ENCODE measurements at regions of chr14 and their contacts with region 1.

Region 1: GRCh38 chr14:66359500-66359899 is 126.7 kb upstream of the CCDC196 start:
- DNase-seq: peak; percentile 23
- ATAC-seq: no peak
- H3K4me3 Mint-ChIP-seq: no peak overlapping the region
- H3K27ac Mint-ChIP-seq: no peak overlapping the region
- H3K4me1 Mint-ChIP-seq: no peaks in the 10 kb centered on the region
- H3K27me3 Mint-ChIP-seq: no peaks in the 10 kb centered on the region

Region 2: DNA sequence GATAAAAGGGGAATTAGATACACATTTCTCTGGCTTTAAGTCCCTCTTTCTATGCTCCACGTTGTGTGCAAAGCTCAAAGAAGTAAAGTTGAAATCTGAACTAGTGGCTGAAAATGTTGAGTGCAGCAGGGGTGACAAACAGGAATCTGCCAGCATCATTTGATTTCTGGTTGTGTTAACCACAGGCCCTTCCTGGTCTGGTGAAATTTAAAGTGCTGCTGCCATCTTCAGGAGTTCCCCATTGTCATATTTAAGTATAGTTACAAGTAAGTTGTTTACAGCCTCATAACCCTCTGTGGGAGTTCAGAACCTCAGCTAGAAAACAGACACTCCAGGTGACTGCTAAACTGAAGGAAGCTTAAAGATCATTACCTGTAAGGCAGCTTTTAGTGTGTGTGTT is 35.8 kb after region 1 on chr14:
- CTCF ChIA-PET with region 1: interaction called, 72 read pairs
- POLR2A ChIA-PET with region 1: no interaction called
- intact Hi-C with region 1: loop called in 1 of 2 experiments (anchors 1 kb)
- DNase-seq: peak; percentile 30
- ATAC-seq: peak; percentile 89
- H3K4me3 Mint-ChIP-seq: no peak overlapping the region
- H3K27ac Mint-ChIP-seq: no peak overlapping the region
- H3K4me1 Mint-ChIP-seq: peaks cover 6% of the 10 kb centered on the region
- H3K27me3 Mint-ChIP-seq: no peaks in the 10 kb centered on the region

Region 3: DNA sequence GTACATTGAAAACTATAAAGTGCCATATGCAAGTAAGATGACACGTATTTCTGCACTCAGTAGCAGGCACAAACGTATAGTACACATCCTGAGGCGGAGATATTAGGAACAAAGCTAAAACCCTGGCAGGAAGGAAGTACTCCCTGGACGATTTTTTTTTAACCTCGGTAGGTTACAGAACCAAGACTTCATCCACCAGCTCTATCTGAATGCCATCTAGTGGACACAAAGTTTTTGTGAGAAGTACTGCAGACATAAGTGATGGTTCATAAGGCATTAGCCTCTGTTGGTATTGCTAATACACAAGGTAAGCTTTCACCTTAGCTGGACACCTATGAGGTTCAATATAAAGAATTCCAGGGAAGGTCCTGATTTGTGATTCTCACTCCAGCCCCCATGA is 43.7 kb after region 1 on chr14:
- CTCF ChIA-PET with region 1: interaction called, 72 read pairs
- POLR2A ChIA-PET with region 1: no interaction called
- intact Hi-C with region 1: loop called (anchors 1 kb)
- DNase-seq: no peak
- ATAC-seq: peak; percentile 36
- H3K4me3 Mint-ChIP-seq: no peak overlapping the region
- H3K27ac Mint-ChIP-seq: no peak overlapping the region
- H3K4me1 Mint-ChIP-seq: peaks cover 5% of the 10 kb centered on the region
- H3K27me3 Mint-ChIP-seq: no peaks in the 10 kb centered on the region

Region 4: DNA sequence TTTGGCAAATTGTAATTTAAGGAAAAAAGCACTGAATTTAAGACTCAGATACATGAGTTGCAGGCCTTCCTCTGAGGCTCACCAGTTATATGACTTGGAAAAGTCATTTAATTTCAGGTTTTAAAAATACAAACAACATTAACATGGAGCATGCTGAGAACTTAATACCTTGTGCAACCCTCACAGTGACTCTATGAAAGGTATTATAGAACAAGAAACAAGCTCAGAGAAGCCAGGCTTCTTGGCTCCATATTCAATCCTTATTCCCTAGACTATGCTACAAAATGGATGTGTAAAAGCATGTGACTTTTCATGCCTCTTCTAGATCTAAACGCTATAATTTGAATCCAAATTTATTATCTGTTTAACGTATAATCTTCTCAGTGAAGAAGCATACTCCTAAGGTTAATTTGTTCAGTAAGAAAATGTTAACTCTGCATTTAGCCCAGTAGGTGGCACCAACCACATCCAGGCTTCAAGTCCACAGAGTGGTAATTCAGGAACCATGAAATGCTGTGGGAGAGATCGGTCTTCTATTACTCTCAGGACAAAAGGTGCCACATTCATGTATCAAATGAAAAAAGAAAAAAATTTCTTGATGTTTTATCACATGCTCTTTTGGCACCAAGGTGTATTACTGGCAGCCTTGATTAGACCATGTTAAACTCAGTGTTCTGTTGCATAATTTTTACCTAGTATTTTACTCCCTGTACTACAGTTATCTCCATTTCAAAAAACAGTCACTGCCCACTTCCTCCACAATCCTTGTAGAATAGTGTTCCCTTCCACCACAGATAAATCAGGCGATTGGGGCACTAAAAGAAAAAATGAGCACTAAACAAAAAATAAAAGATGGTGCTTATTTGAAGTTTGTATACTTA is 136.0 kb after region 1 on chr14:
- CTCF ChIA-PET with region 1: interaction called, 4 read pairs
- POLR2A ChIA-PET with region 1: no interaction called
- intact Hi-C with region 1: loop called (anchors 2 to 5 kb)
- DNase-seq: peak; percentile 52
- ATAC-seq: peak; percentile 83
- H3K4me3 Mint-ChIP-seq: no peak overlapping the region
- H3K27ac Mint-ChIP-seq: no peak overlapping the region
- H3K4me1 Mint-ChIP-seq: peaks cover 19% of the 10 kb centered on the region
- H3K27me3 Mint-ChIP-seq: no peaks in the 10 kb centered on the region

Region 5: GRCh38 chr14:66974397-66975025 is 615.0 kb after region 1 on chr14:
- CTCF ChIA-PET with region 1: no interaction called
- POLR2A ChIA-PET with region 1: no interaction called
- intact Hi-C with region 1: no loop called
- DNase-seq: no peak
- ATAC-seq: no peak
- H3K4me3 Mint-ChIP-seq: no peak overlapping the region
- H3K27ac Mint-ChIP-seq: no peak overlapping the region
- H3K4me1 Mint-ChIP-seq: peaks cover 2% of the 10 kb centered on the region
- H3K27me3 Mint-ChIP-seq: no peaks in the 10 kb centered on the region

Region 6: GRCh38 chr14:67111022-67111421 is 751.5 kb after region 1 on chr14:
- CTCF ChIA-PET with region 1: interaction called, 3 read pairs
- POLR2A ChIA-PET with region 1: no interaction called
- intact Hi-C with region 1: loop called in 1 of 2 experiments (anchors 5 kb)
- DNase-seq: no peak
- ATAC-seq: no peak
- H3K4me3 Mint-ChIP-seq: no peak overlapping the region
- H3K27ac Mint-ChIP-seq: no peak overlapping the region
- H3K4me1 Mint-ChIP-seq: no peaks in the 10 kb centered on the region
- H3K27me3 Mint-ChIP-seq: no peaks in the 10 kb centered on the region

Region 7: GRCh38 chr14:67285876-67286452 is 926.5 kb after region 1 on chr14:
- CTCF ChIA-PET with region 1: interaction called, 11 read pairs
- POLR2A ChIA-PET with region 1: no interaction called
- intact Hi-C with region 1: loop called in 1 of 2 experiments (anchors 5 kb)
- DNase-seq: no peak
- ATAC-seq: no peak
- H3K4me3 Mint-ChIP-seq: no peak overlapping the region
- H3K27ac Mint-ChIP-seq: no peak overlapping the region
- H3K4me1 Mint-ChIP-seq: no peaks in the 10 kb centered on the region
- H3K27me3 Mint-ChIP-seq: no peaks in the 10 kb centered on the region

Region 8: DNA sequence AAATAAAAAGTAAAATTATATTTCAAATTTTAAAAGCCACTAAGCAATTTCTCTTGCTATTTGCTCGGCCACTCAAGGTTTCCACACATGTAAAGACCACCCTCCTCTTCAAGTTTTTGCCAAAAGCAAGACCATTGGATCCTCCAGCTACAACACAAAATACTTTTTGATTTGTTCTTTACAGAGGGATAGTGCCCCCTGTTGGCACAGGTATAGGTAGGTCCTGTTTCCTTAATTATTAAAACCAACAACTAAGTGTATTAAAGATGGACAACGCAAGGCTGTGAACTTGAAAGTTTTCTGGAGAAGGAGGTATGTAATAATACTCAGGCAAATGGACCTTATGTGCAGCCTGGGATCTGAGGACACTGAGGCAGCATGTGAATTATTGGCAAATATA is 976.3 kb after region 1 on chr14:
- CTCF ChIA-PET with region 1: no interaction called
- POLR2A ChIA-PET with region 1: no interaction called
- intact Hi-C with region 1: loop called in 1 of 2 experiments (anchors 5 kb)
- DNase-seq: peak; percentile 30
- ATAC-seq: no peak
- H3K4me3 Mint-ChIP-seq: no peak overlapping the region
- H3K27ac Mint-ChIP-seq: no peak overlapping the region
- H3K4me1 Mint-ChIP-seq: no peaks in the 10 kb centered on the region
- H3K27me3 Mint-ChIP-seq: no peaks in the 10 kb centered on the region

Measured in activated CD4-positive, alpha-beta T cell treated with anti-CD3 and anti-CD28 coated beads for 36 hours (primary cell).